GM10248 (cell line): ENCODE measurements at regions of chr1 and their contacts with region 1.

Region 1: DNA sequence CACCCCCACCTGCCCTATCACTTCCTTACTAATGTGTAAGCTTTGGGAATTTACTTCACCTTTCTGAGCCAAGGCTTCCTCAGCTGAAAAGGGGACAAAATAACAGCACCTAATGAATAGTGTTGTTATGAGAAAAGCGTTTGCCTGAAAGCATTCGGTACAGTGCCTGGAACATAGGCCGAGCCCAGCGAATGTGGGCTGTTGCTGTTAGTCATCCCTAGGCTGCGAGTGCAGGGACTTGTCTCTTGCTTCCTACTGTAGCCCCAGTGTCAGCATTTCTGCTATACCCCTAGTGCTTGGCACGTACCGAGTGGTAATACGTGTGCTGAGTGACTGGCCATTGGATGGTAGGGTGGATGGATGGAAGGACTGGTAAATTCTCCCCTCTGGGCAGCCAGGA is 16.7 kb upstream of the KPNA6 start:
- DNase-seq: no peak
- CTCF ChIP-seq: no peak

Region 2: DNA sequence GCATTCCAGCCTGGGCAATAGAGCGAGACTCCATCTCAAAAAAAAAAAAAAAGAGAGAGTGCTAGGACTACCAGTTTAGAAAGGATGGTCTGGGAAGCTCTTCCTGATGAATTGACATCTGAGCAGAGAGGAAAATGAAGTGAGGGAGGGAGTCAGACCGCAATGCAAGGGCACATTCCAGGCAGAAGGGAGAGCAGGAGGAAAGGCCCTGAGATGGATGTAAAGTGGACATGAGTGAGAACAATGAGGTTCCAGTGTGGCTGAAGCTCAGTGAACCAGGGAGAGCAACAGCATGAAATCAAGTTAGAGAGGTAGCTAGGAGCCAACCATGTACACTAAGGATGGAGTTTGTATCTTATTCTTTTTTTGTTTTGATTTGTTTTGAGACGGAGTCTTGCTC is 219.5 kb before region 1 on chr1:
- CTCF ChIA-PET with region 1: no interaction called
- POLR2A ChIA-PET with region 1: interaction called, 13 read pairs
- DNase-seq: no peak
- CTCF ChIP-seq: no peak

Region 3: GRCh38 chr1:32454726-32455125 is 363.6 kb after region 1 on chr1:
- CTCF ChIA-PET with region 1: no interaction called
- POLR2A ChIA-PET with region 1: no interaction called
- DNase-seq: no peak
- CTCF ChIP-seq: no peak